T-cell (primary cell): ENCODE measurements at regions of chr12 and their contacts with region 1.

Region 1: GRCh38 chr12:389139-390096 is at the start of gene KDM5A:
- DNase-seq: peak; percentile 81 to 95 (median 89)
- ATAC-seq: peak; percentile 92 to 94 (median 92)
- H3K4me3 ChIP-seq: peak within 1 kb of the TSS; percentile 78 to 98
- H3K4me3 Mint-ChIP-seq: peak within 1 kb of the TSS; percentile 84 to 97 (median 96)
- H3K27ac ChIP-seq: peak within 1 kb of the TSS; percentile 95
- H3K27ac Mint-ChIP-seq: peak within 1 kb of the TSS; percentile 98
- H3K4me1 ChIP-seq: peaks cover 17 to 25% of the 10 kb centered on the region in 2 experiments
- H3K4me1 Mint-ChIP-seq: peaks cover 43 to 55% (median 48%) of the 10 kb centered on the region in 3 donors
- H3K27me3 ChIP-seq: no peaks in the 10 kb centered on the region
- H3K27me3 Mint-ChIP-seq: no peaks in the 10 kb centered on the region
- total RNA-seq, gene KDM5A: 126 to 157 (median 142) TPM

Region 2: GRCh38 chr12:367972-368371 is 21.4 kb before region 1 on chr12:
- CTCF ChIA-PET with region 1: interaction called in 1 of 2 experiments, 10 read pairs
- POLR2A ChIA-PET with region 1: no interaction called
- DNase-seq: no peak
- ATAC-seq: no peak
- H3K4me3 ChIP-seq: no peak overlapping the region
- H3K4me3 Mint-ChIP-seq: no peak overlapping the region
- H3K27ac ChIP-seq: no peak overlapping the region
- H3K27ac Mint-ChIP-seq: peak overlapping the region in 1 of 2 donors; percentile 8
- H3K4me1 ChIP-seq: no peaks in the 10 kb centered on the region
- H3K4me1 Mint-ChIP-seq: peaks cover 0 to 5% (median 3%) of the 10 kb centered on the region in 3 donors
- H3K27me3 ChIP-seq: no peaks in the 10 kb centered on the region
- H3K27me3 Mint-ChIP-seq: no peaks in the 10 kb centered on the region

Region 3: GRCh38 chr12:401235-402028 is 12.0 kb after region 1 on chr12 and contains the start of gene CCDC77:
- CTCF ChIA-PET with region 1: interaction called, 3 to 26 read pairs
- POLR2A ChIA-PET with region 1: interaction called, 5 to 14 read pairs
- DNase-seq: peak; percentile 79 to 97 (median 90)
- ATAC-seq: peak; percentile 100
- H3K4me3 ChIP-seq: peak within 1 kb of the TSS; percentile 70 to 71
- H3K4me3 Mint-ChIP-seq: no peak within 1 kb of the TSS
- H3K27ac ChIP-seq: peak within 1 kb of the TSS; percentile 37
- H3K27ac Mint-ChIP-seq: no peak within 1 kb of the TSS
- H3K4me1 ChIP-seq: peaks cover 5 to 10% of the 10 kb centered on the region in 2 experiments
- H3K4me1 Mint-ChIP-seq: peaks cover 0 to 5% (median 2%) of the 10 kb centered on the region in 3 donors
- H3K27me3 ChIP-seq: no peaks in the 10 kb centered on the region
- H3K27me3 Mint-ChIP-seq: no peaks in the 10 kb centered on the region
- total RNA-seq, gene CCDC77: 9.7 to 14.6 (median 10.3) TPM

Region 4: DNA sequence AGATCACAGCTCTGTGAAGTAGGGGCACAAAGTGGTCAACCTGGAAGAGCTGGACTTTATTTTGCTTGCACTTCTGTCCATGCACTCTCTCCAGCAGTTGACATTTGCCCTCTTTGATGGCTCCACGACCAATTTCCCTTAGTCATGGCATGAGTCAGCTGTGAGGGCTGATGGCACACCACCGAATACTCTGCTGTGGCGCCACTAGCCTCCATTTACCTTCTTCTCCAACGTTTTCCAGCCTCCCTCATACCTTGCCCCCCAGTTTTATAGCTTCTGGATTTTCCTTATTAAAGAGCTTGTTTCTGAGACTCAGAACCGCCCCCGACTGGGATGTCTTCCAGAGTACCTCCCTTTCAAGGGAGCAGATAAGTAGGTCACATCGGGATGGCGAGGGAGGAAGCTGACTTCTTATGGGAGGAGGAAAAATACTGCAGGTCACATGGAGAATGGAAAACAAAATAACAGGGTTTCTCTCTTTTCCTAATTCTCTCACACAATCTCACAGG is 256.2 kb after region 1 on chr12:
- CTCF ChIA-PET with region 1: interaction called in 1 of 2 experiments, 4 read pairs
- POLR2A ChIA-PET with region 1: interaction called, 5 to 11 read pairs
- DNase-seq: no peak
- ATAC-seq: no peak
- H3K4me3 ChIP-seq: no peak overlapping the region
- H3K4me3 Mint-ChIP-seq: no peak overlapping the region
- H3K27ac ChIP-seq: no peak overlapping the region
- H3K27ac Mint-ChIP-seq: peak overlapping the region in 1 of 2 donors; percentile 81
- H3K4me1 ChIP-seq: peaks cover 11 to 35% of the 10 kb centered on the region in 2 experiments
- H3K4me1 Mint-ChIP-seq: peaks cover 30 to 44% (median 37%) of the 10 kb centered on the region in 3 donors
- H3K27me3 ChIP-seq: no peaks in the 10 kb centered on the region
- H3K27me3 Mint-ChIP-seq: no peaks in the 10 kb centered on the region